Ovary (tissue), 10 donors: ENCODE measurements at regions of chr18 and their contacts with region 1.

Region 1: DNA sequence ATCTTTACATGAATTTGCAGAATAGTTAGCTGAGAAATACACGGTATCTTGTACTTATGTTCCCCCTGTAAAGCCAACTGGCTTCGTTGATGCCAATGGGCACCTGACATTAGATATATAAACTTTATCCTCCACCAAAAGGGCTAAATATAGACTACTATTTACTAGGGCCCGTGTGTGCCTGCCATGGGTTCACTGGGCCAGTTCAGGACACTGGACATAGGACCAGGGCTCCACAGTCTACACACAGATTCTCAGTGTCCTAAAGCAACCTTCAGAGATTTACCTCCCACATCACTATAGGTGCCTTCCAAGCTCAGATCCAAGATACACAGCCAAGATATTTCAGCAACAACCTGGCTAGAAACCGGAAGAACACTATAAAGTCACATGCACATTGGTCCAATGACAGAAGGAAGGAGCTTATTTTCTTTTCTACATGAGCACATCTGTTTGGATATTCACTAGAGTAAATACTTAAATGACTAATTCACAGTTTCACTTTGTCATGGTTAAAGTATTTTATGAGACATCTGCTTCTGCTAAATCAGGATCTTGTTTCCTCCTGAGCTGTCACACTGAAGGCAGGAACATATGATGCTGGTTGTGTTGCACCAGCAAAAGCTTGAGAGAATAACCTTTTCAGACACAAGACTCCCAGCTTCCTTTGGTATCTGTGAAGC is 95.1 kb downstream of the MYO5B start:
- DNase-seq: no peak
- H3K4me3 ChIP-seq: no peak overlapping the region
- H3K27ac ChIP-seq: no peak overlapping the region
- H3K4me1 ChIP-seq: no peaks in the 10 kb centered on the region
- H3K27me3 ChIP-seq: no peaks in the 10 kb centered on the region
- CTCF ChIP-seq: no peak
- EP300 ChIP-seq: no peak
- POLR2A ChIP-seq: no peak

Region 2: GRCh38 chr18:50061876-50062517 is 37.9 kb before region 1 on chr18:
- intact Hi-C with region 1: no loop called
- DNase-seq: peak in 1 of 5 donors; percentile 34
- H3K4me3 ChIP-seq: no peak overlapping the region
- H3K27ac ChIP-seq: no peak overlapping the region
- H3K4me1 ChIP-seq: no peaks in the 10 kb centered on the region
- H3K27me3 ChIP-seq: no peaks in the 10 kb centered on the region
- CTCF ChIP-seq: no peak
- EP300 ChIP-seq: no peak
- POLR2A ChIP-seq: no peak

Region 3: GRCh38 chr18:50158923-50159653 is 59.2 kb after region 1 on chr18:
- intact Hi-C with region 1: loop called in 1 of 4 experiments (anchors 10 kb)
- DNase-seq: no peak
- H3K4me3 ChIP-seq: no peak overlapping the region
- H3K27ac ChIP-seq: no peak overlapping the region
- H3K4me1 ChIP-seq: peaks cover 5% of the 10 kb centered on the region
- H3K27me3 ChIP-seq: no peaks in the 10 kb centered on the region
- CTCF ChIP-seq: no peak
- EP300 ChIP-seq: no peak
- POLR2A ChIP-seq: no peak